ENCODE measurements at regions of chr11 and their contacts with region 1.

Region 1: GRCh38 chr11:62841361-62842184 is 2.2 kb upstream of the WDR74 start:
- DNase-seq: peak; percentile 88
- H3K4me3 ChIP-seq: peak overlapping the region; percentile 40 to 90 (median 55)
- H3K27ac ChIP-seq: peak overlapping the region; percentile 95
- H3K4me1 ChIP-seq: peaks cover 0 to 5% (median 1%) of the 10 kb centered on the region in 4 experiments; a peak in 2 of 7 replicates
- H3K27me3 ChIP-seq: no peaks in the 10 kb centered on the region
- CTCF ChIP-seq: no peak
- EP300 ChIP-seq: 0 out of 3 replicates have a peak, but pooled peaks of 1 of the 2 experiments have one; percentile 63
- POLR2A ChIP-seq: peak; percentile 100
- RAD21 ChIP-seq: no peak

Region 2: GRCh38 chr11:62383822-62384221 is 457.8 kb before region 1 on chr11:
- CTCF ChIA-PET with region 1: no interaction called
- POLR2A ChIA-PET with region 1: no interaction called
- DNase-seq: no peak
- H3K4me3 ChIP-seq: no peak overlapping the region
- H3K27ac ChIP-seq: no peak overlapping the region
- H3K4me1 ChIP-seq: no peaks in the 10 kb centered on the region
- H3K27me3 ChIP-seq: no peaks in the 10 kb centered on the region
- CTCF ChIP-seq: no peak
- EP300 ChIP-seq: no peak
- POLR2A ChIP-seq: no peak
- RAD21 ChIP-seq: no peak

Region 3: DNA sequence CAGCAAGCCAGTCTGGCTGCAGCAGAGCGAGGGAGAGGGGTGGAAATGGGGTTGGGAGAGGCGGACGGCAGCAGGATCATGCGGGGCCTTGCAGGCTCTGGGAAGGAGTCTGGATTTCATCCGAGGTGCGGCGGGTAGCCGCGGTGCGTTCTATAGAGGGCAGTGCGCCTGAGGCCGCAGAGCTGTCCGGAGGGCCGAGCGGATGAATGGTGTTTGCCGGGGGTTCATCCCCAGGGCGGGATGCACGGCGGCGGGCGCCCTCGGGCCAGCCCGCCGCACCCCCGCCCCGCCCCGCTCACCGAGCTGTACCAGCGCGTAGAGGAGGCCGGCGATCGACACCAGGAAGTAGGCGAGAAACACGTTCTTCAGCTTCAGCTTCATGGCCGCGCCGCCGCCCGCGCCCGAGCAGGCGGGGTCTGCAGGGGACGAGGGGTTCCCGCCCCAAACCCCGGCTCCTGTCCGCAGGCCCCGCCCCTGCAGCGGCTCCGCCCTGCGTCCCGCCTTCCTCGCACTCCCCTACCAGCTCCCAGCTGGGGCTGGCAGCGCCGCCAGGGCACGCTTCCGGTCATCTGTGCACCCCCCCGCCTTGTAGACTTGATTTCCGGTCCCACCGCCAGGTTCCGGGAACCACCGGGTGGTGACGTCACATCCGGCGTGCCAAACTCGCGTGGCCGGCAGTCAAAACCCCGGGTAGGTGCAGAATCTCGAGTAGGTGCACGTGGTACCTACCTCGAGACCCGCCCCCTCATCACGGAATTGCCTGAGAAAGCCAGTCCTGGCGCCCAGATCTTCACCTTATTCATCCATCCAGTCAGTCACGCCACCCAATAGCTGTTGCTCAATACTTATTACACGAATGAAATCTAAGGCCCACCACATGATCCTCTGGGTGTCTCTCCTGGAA is 219.8 kb before region 1 on chr11 and contains the start of gene B3GAT3:
- CTCF ChIA-PET with region 1: no interaction called
- POLR2A ChIA-PET with region 1: interaction called, 11 read pairs
- DNase-seq: peak; percentile 97 to 98
- H3K4me3 ChIP-seq: peak within 1 kb of the TSS; percentile 59 to 87 (median 83)
- H3K27ac ChIP-seq: peak within 1 kb of the TSS; percentile 46
- H3K4me1 ChIP-seq: peaks cover 0 to 5% (median 0%) of the 10 kb centered on the region in 4 experiments; a peak in 1 of 7 replicates
- H3K27me3 ChIP-seq: no peaks in the 10 kb centered on the region
- CTCF ChIP-seq: peak in 1 of 3 experiments; percentile 7; a peak in 1 of 4 replicates
- EP300 ChIP-seq: no peak
- POLR2A ChIP-seq: peak in 1 of 2 experiments; percentile 96; a peak in 2 of 3 replicates
- RAD21 ChIP-seq: peak; percentile 0; a peak in 2 of 4 replicates
- total RNA-seq, gene B3GAT3: 28.0 and 34.5 TPM in 2 replicates

Region 4: GRCh38 chr11:62726915-62727763 is 114.4 kb before region 1 on chr11 and contains the start of gene HNRNPUL2:
- CTCF ChIA-PET with region 1: no interaction called
- POLR2A ChIA-PET with region 1: interaction called, 71 read pairs
- DNase-seq: peak; percentile 94 to 97
- H3K4me3 ChIP-seq: peak within 1 kb of the TSS; percentile 87 to 98 (median 96)
- H3K27ac ChIP-seq: peak within 1 kb of the TSS; percentile 92
- H3K4me1 ChIP-seq: no peaks in the 10 kb centered on the region; a peak in 3 of 7 replicates
- H3K27me3 ChIP-seq: no peaks in the 10 kb centered on the region
- CTCF ChIP-seq: no peak
- EP300 ChIP-seq: 0 out of 3 replicates have a peak, but pooled peaks of 1 of the 2 experiments have one; percentile 25
- POLR2A ChIP-seq: peak; percentile 90
- RAD21 ChIP-seq: no peak
- total RNA-seq, gene HNRNPUL2: 44.3 and 46.4 TPM in 2 replicates

Region 5: GRCh38 chr11:62777389-62777788 is 64.2 kb before region 1 on chr11:
- CTCF ChIA-PET with region 1: interaction called, 4 read pairs
- POLR2A ChIA-PET with region 1: interaction called, 29 read pairs
- DNase-seq: no peak
- H3K4me3 ChIP-seq: no peak overlapping the region
- H3K27ac ChIP-seq: no peak overlapping the region
- H3K4me1 ChIP-seq: no peaks in the 10 kb centered on the region
- H3K27me3 ChIP-seq: no peaks in the 10 kb centered on the region
- CTCF ChIP-seq: no peak
- EP300 ChIP-seq: no peak
- POLR2A ChIP-seq: no peak
- RAD21 ChIP-seq: no peak

Region 6: DNA sequence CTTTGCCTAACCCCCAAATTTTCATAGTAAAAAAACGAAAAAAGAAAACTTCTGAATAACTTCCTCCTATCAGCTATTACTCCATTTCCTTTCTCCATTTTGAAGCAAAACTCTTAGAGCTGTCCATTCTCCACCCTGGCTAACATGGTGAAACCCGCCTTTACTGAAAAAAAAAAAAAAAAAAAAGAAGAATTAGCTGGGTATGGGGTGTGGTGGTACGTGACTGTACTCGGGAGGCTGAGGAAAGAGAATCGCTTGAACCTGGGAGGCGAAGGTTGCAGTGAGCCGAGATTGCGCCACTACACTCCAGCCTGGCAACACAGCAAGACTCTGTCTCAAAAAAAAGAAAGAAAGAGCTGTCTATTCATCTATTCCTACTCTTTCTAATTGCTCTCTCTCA is 25.0 kb before region 1 on chr11:
- CTCF ChIA-PET with region 1: interaction called, 3 read pairs
- POLR2A ChIA-PET with region 1: interaction called, 44 read pairs
- DNase-seq: no peak
- H3K4me3 ChIP-seq: no peak overlapping the region
- H3K27ac ChIP-seq: no peak overlapping the region
- H3K4me1 ChIP-seq: no peaks in the 10 kb centered on the region
- H3K27me3 ChIP-seq: no peaks in the 10 kb centered on the region
- CTCF ChIP-seq: no peak
- EP300 ChIP-seq: no peak
- POLR2A ChIP-seq: no peak
- RAD21 ChIP-seq: no peak

Region 7: DNA sequence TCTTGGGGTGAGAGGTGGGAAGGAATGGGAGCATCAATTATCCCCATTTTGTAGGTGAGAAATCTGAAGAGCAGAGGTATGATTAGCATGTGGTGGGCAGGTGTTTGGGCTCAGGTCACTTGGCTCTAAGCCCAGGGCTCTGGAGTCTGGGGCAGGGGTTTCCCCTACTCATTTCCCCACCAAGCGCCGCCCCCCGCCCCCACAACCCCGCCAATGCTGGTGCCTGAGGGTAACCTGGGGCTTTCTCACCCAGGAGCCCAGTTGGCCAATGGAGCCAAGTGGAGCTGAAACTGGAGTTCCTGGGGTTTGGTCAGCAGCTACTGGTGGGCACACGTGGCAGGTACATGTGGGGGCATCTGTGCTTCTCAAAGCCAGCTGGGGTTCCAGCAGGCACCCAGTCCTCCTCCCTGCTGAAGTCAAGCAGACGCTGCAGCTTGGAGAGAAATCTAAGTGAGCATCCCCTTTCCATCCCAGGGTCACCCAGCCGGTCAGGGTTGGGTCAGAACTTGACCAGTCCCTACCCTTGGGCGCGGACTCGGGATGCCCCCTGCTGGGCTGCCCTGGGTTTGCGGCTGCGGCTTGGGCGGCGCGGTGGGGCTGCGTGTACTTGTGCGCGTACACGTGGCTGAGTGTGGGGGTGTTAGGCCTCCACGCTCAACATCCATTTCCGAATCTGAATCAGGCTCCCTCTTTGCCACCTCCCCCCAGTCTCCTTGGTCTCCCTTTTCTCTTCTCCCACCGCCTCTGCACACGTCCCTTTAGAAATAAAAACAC is 81.3 kb after region 1 on chr11:
- CTCF ChIA-PET with region 1: no interaction called
- POLR2A ChIA-PET with region 1: interaction called, 19 read pairs
- DNase-seq: peak in 1 of 2 experiments; percentile 87
- H3K4me3 ChIP-seq: peak overlapping the region; percentile 3 to 64 (median 16); a peak in 4 of 8 replicates
- H3K27ac ChIP-seq: no peak overlapping the region
- H3K4me1 ChIP-seq: peaks cover 6 to 35% (median 21%) of the 10 kb centered on the region in 4 experiments
- H3K27me3 ChIP-seq: peaks cover 15 to 45% (median 41%) of the 10 kb centered on the region in 4 experiments
- CTCF ChIP-seq: peak; percentile 62 to 79 (median 69)
- EP300 ChIP-seq: no peak
- POLR2A ChIP-seq: no peak
- RAD21 ChIP-seq: peak; percentile 60 to 76